CD4-positive, alpha-beta memory T cell (primary cell): ENCODE measurements at regions of chr10 and their contacts with region 1.

Region 1: DNA sequence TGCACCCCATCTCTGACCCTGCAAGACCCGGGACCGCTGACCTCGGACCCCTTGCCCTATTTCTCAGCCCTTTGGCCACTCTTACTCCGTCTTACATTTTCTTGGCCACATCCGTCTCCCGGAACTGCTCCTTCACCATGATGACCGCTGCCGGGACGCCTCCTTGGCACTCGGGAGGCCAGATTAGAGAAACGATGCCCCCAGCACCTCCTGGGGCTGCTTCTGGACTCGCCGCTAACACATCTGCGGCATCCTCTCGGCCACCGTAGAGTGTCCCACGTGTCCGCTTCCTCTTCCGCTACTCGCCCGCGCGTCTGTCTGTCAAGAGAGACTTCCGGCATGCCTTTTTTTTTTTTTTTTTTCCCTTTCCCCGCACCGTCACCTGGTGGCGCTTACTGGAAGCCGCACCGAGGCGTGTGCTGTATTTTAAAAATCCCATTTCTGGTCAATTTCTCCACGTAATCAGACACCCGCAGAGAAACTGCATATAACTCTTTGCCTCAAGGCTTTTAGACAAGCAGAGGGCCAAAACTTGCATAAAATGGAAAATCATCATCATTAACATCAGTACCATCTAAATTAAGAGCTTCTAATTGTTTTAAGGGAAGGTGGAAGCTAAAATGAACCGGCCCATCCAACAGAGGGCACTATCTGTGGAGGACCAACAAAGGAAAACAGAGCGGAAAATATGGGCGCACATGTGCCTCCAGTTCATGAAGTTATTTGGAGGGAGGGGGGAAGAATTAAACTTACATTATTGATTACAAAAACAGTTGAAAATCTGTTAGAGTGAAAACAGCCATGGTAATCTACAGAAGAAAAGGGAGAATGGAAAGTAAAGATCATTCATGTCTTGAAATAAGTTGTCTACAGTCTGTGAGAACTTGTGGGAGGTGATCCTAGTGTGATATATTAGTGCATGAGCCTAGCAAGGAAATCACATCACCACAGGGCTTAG is at the start of gene POLR3A:
- DNase-seq: peak; percentile 91 to 93 (median 92)
- H3K4me3 ChIP-seq: peak within 1 kb of the TSS; percentile 80 to 98
- H3K4me3 Mint-ChIP-seq: peak within 1 kb of the TSS; percentile 98 to 99 (median 99)
- H3K27ac ChIP-seq: peak within 1 kb of the TSS; percentile 71
- H3K27ac Mint-ChIP-seq: peak within 1 kb of the TSS; percentile 92 to 98 (median 96)
- H3K4me1 ChIP-seq: peaks cover 32% of the 10 kb centered on the region
- H3K4me1 Mint-ChIP-seq: peaks cover 28 to 52% (median 40%) of the 10 kb centered on the region in 4 donors
- H3K27me3 ChIP-seq: no peaks in the 10 kb centered on the region
- H3K27me3 Mint-ChIP-seq: no peaks in the 10 kb centered on the region
- total RNA-seq, gene POLR3A: 16.9 to 17.6 TPM

Region 2: GRCh38 chr10:77837240-77837924 is 192.2 kb before region 1 on chr10:
- CTCF ChIA-PET with region 1: no interaction called
- POLR2A ChIA-PET with region 1: no interaction called
- intact Hi-C with region 1: loop called (anchors 5 kb)
- DNase-seq: peak; percentile 67 to 80 (median 75)
- H3K4me3 ChIP-seq: no peak overlapping the region
- H3K4me3 Mint-ChIP-seq: peak overlapping the region in 7 of 8 donors; percentile 31 to 71 (median 57)
- H3K27ac ChIP-seq: peak overlapping the region; percentile 59
- H3K27ac Mint-ChIP-seq: peak overlapping the region; percentile 81 to 93 (median 90)
- H3K4me1 ChIP-seq: peaks cover 36% of the 10 kb centered on the region
- H3K4me1 Mint-ChIP-seq: peaks cover 19 to 48% (median 30%) of the 10 kb centered on the region in 4 donors
- H3K27me3 ChIP-seq: no peaks in the 10 kb centered on the region
- H3K27me3 Mint-ChIP-seq: no peaks in the 10 kb centered on the region

Region 3: DNA sequence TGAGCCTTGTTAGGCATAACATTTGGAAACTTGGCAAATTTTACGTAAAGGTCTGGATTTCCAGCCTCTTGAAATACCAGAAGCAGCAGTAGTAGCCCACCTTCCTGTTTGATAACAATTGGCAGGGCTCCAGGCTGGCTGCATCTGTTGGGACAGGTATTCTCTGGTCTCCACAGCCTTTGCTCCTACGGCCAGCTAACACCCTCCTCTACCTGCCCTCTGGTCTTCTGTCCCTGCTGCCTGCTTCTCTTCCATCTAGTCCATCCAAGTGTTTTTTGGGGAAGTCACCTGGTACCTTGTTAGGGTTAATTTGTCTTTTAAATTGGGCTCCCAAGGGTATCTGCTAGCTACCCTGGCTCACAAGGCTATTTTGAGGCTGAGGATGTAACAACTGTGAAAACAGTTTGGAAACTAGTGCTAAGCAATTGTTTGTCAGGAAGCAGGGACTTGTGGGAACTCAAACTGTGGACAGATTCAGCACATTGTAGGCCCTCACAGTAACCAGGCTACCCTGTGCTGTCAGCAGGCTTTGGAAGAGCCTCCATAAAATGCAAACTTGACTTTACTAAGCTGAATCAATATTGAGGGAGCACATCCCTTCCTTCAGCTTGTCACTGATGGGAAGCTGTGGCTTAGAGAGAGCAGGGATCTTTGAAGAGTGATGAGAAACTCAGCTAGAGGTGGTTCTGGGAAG is 12.7 kb after region 1 on chr10:
- CTCF ChIA-PET with region 1: interaction called, 14 read pairs
- POLR2A ChIA-PET with region 1: interaction called, 16 read pairs
- intact Hi-C with region 1: no loop called
- DNase-seq: no peak
- H3K4me3 ChIP-seq: no peak overlapping the region
- H3K4me3 Mint-ChIP-seq: no peak overlapping the region
- H3K27ac ChIP-seq: no peak overlapping the region
- H3K27ac Mint-ChIP-seq: peak overlapping the region in 4 of 7 donors; percentile 14 to 68 (median 23)
- H3K4me1 ChIP-seq: peaks cover 28% of the 10 kb centered on the region
- H3K4me1 Mint-ChIP-seq: peaks cover 21 to 51% (median 33%) of the 10 kb centered on the region in 4 donors
- H3K27me3 ChIP-seq: no peaks in the 10 kb centered on the region
- H3K27me3 Mint-ChIP-seq: no peaks in the 10 kb centered on the region

Region 4: DNA sequence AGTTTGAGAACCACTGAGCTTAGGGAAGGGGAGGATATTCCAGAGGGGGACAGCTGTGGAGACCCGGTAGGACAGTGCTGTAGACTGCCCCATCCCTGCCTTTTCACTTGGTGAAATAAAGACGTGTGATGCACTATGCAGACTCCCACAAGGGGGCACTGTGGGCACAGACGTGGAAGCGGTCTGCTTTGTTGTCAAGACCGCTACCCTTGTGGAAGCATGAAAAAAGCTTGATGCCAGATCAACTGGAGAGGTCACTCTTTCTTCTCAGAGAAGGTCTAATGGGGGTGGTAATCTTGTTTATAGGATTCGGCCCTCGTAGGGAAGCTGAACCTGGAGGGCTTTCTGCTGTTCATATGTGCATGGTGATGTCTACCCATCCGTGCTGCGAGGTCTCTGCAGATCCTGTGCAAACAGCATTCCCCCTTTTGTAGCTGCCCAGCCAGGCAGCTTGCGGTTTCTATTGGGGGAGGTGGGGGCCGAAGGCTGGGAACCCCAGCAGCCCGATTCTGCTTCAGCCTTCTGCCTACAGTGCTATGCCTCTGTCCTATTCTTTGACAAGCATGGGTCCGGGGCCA is 17.9 kb after region 1 on chr10:
- CTCF ChIA-PET with region 1: interaction called, 14 read pairs
- POLR2A ChIA-PET with region 1: interaction called, 16 read pairs
- intact Hi-C with region 1: no loop called
- DNase-seq: peak; percentile 64 to 76 (median 73)
- H3K4me3 ChIP-seq: no peak overlapping the region
- H3K4me3 Mint-ChIP-seq: no peak overlapping the region
- H3K27ac ChIP-seq: no peak overlapping the region
- H3K27ac Mint-ChIP-seq: peak overlapping the region in 1 of 7 donors; percentile 62
- H3K4me1 ChIP-seq: peaks cover 7% of the 10 kb centered on the region
- H3K4me1 Mint-ChIP-seq: peaks cover 3 to 15% (median 11%) of the 10 kb centered on the region in 4 donors
- H3K27me3 ChIP-seq: no peaks in the 10 kb centered on the region
- H3K27me3 Mint-ChIP-seq: no peaks in the 10 kb centered on the region

Region 5: GRCh38 chr10:78302989-78303854 is 273.7 kb after region 1 on chr10:
- CTCF ChIA-PET with region 1: interaction called, 4 read pairs
- POLR2A ChIA-PET with region 1: interaction called, 6 read pairs
- intact Hi-C with region 1: loop called (anchors 1 kb)
- DNase-seq: peak; percentile 93 to 96 (median 95)
- H3K4me3 ChIP-seq: peak overlapping the region; percentile 67 to 70
- H3K4me3 Mint-ChIP-seq: peak overlapping the region; percentile 92 to 97 (median 94)
- H3K27ac ChIP-seq: peak overlapping the region; percentile 91
- H3K27ac Mint-ChIP-seq: peak overlapping the region; percentile 95 to 99 (median 98)
- H3K4me1 ChIP-seq: peaks cover 17% of the 10 kb centered on the region
- H3K4me1 Mint-ChIP-seq: peaks cover 7 to 24% (median 14%) of the 10 kb centered on the region in 4 donors
- H3K27me3 ChIP-seq: no peaks in the 10 kb centered on the region
- H3K27me3 Mint-ChIP-seq: peaks cover 0 to 2% of the 10 kb centered on the region in 2 donors

Region 6: DNA sequence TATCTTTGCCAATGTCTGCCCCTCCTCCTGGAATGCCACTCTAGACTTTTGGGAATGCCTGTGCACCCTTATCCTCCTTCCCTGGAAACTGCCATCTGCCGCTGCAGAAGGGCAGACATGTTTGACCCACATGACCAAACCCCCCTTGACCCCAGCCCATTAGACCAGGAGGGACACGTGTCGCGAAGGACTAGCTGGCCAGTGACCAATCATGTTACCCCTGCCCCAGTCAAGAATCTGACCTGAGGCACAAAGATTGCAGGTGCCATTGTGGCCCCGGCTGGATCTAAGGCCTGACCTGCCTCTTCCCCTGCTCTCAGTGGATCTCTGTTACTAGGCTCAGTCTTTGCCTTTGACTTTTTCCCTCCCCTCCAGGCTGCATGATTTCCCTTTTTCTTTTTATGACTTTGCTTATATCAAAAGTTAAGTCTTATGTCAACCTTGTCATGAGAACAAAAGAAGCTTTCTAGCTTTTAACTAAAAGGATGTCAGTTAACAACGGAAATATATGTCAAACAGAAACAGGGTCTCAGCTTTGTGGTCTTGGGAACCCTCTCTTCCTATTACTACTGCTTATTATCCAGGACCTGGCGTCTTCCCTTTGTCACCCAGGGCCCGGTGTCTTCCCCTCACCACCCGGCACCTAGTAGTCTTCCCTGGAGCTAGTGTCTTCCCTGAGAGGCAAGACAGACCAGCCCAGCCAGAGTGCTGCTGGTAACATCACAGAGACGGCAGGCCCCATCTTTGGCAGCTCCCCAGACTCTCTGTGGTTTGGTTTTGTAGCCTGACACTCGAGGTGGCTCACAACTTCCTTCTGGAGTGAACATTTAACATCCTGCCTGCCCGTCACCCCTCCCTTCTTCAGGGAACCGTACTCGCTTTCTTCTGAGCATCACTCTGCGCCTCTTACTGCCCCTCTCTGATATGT is 1293.3 kb after region 1 on chr10:
- CTCF ChIA-PET with region 1: no interaction called
- POLR2A ChIA-PET with region 1: no interaction called
- intact Hi-C with region 1: loop called (anchors 10 kb)
- DNase-seq: peak; percentile 85 to 94 (median 88)
- H3K4me3 ChIP-seq: peak overlapping the region; percentile 8 to 41
- H3K4me3 Mint-ChIP-seq: peak overlapping the region; percentile 41 to 91 (median 85)
- H3K27ac ChIP-seq: peak overlapping the region; percentile 37
- H3K27ac Mint-ChIP-seq: peak overlapping the region; percentile 92 to 98 (median 96)
- H3K4me1 ChIP-seq: peaks cover 88% of the 10 kb centered on the region
- H3K4me1 Mint-ChIP-seq: peaks cover 58 to 68% (median 65%) of the 10 kb centered on the region in 4 donors
- H3K27me3 ChIP-seq: no peaks in the 10 kb centered on the region
- H3K27me3 Mint-ChIP-seq: no peaks in the 10 kb centered on the region

Region 7: GRCh38 chr10:79445141-79445976 is 1415.8 kb after region 1 on chr10 and contains the start of gene ZCCHC24:
- CTCF ChIA-PET with region 1: no interaction called
- POLR2A ChIA-PET with region 1: no interaction called
- intact Hi-C with region 1: loop called (anchors 10 kb)
- DNase-seq: peak; percentile 95 to 97 (median 97)
- H3K4me3 ChIP-seq: peak within 1 kb of the TSS; percentile 63 to 64
- H3K4me3 Mint-ChIP-seq: peak within 1 kb of the TSS; percentile 87 to 98 (median 90)
- H3K27ac ChIP-seq: peak within 1 kb of the TSS; percentile 57
- H3K27ac Mint-ChIP-seq: peak within 1 kb of the TSS; percentile 85 to 98 (median 91)
- H3K4me1 ChIP-seq: peaks cover 21% of the 10 kb centered on the region
- H3K4me1 Mint-ChIP-seq: peaks cover 17 to 34% (median 23%) of the 10 kb centered on the region in 4 donors
- H3K27me3 ChIP-seq: no peaks in the 10 kb centered on the region
- H3K27me3 Mint-ChIP-seq: no peaks in the 10 kb centered on the region
- total RNA-seq, gene ZCCHC24: 1.7 to 1.9 TPM